T-cell (primary cell): ENCODE measurements at regions of chr2 and their contacts with region 1.

Region 1: DNA sequence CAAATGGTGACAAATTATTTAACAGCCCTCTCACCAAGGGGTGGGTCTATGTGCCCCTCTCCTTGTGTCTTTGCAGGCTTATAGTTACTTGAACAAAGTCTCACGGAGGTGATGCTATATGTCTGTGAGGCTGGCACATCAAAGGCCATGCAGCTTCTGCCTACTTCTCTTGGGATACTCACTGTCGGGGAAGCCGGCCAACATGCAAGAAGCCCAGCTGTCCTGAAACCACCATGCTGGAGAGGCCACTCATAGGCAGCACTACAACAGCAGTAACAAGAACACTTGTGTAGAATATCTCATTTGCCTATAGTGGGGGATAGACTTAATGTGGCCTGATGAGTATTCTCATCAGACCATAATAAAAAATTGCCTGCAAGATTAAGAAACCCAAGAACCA is 233.7 kb upstream of the NCKAP5 start:
- DNase-seq: no peak
- ATAC-seq: no peak
- H3K4me3 ChIP-seq: no peak overlapping the region
- H3K4me3 Mint-ChIP-seq: no peak overlapping the region
- H3K27ac ChIP-seq: no peak overlapping the region
- H3K27ac Mint-ChIP-seq: no peak overlapping the region
- H3K4me1 ChIP-seq: no peaks in the 10 kb centered on the region
- H3K4me1 Mint-ChIP-seq: no peaks in the 10 kb centered on the region
- H3K27me3 ChIP-seq: peaks cover 0 to 4% of the 10 kb centered on the region in 2 experiments
- H3K27me3 Mint-ChIP-seq: peaks cover 20 to 28% of the 10 kb centered on the region in 2 donors

Region 2: DNA sequence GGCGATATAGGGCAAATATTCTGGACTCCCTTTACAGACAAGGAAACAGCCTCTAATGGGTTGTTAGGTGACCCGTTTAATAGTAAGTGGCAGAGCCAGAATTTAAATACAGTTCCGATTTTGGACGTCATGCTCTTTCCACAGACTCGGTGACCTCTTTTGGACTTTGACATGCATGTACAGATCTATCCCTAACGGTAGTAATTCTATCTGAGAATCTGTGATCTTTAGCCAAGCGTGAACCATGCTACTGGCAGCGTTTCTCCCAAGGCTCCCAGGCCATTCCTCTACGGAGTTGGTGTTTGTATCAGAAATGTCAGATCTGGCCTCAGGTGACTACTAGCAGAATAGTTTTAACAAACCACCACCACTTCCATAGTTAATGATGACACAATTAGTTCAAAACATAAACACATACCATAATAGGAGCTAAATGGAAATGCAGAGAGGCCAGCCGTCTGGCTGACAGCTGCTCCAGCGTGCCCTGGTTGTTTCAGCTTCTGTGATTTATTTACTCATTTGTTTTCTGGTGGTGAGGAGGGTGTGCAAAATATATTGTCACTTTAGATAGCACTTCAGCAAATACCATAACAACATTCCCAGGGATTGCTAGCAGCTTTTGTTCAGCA is 827.4 kb before region 1 on chr2:
- CTCF ChIA-PET with region 1: no interaction called
- POLR2A ChIA-PET with region 1: interaction called in 1 of 2 experiments, 11 read pairs
- DNase-seq: no peak
- ATAC-seq: no peak
- H3K4me3 ChIP-seq: no peak overlapping the region
- H3K4me3 Mint-ChIP-seq: no peak overlapping the region
- H3K27ac ChIP-seq: no peak overlapping the region
- H3K27ac Mint-ChIP-seq: no peak overlapping the region
- H3K4me1 ChIP-seq: no peaks in the 10 kb centered on the region
- H3K4me1 Mint-ChIP-seq: no peaks in the 10 kb centered on the region
- H3K27me3 ChIP-seq: no peaks in the 10 kb centered on the region
- H3K27me3 Mint-ChIP-seq: no peaks in the 10 kb centered on the region

Region 3: DNA sequence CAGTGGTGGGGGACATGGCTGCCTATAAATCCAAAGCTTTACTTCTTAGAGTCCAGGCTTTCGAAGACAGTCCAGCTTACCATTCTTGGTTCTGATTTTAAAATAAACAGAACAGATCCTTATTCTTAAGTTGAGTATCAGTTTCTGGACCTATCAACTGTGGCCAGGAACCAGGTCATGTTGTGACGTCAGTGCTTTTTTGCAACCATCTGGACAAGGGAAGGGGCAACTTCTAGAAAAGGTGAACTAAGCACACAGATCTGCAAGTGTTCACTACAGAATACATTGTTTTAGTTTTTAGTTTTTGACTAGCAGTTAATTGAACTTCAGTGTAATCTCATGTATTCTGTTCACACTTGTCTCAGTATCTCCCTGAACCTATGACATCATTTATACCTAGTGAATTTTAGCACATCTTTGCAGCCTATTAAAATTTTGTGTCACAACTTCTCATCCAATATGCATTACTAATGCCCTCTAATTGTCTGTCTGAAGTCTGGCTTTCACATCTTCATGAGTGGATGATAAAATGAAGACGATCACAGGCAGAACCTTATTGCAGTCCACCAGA is 126.0 kb after region 1 on chr2:
- CTCF ChIA-PET with region 1: no interaction called
- POLR2A ChIA-PET with region 1: no interaction called
- DNase-seq: no peak
- ATAC-seq: no peak
- H3K4me3 ChIP-seq: no peak overlapping the region
- H3K4me3 Mint-ChIP-seq: no peak overlapping the region
- H3K27ac ChIP-seq: no peak overlapping the region
- H3K27ac Mint-ChIP-seq: no peak overlapping the region
- H3K4me1 ChIP-seq: no peaks in the 10 kb centered on the region
- H3K4me1 Mint-ChIP-seq: no peaks in the 10 kb centered on the region
- H3K27me3 ChIP-seq: peaks cover 0 to 2% of the 10 kb centered on the region in 2 experiments
- H3K27me3 Mint-ChIP-seq: peaks cover 9 to 13% of the 10 kb centered on the region in 2 donors

Region 4: DNA sequence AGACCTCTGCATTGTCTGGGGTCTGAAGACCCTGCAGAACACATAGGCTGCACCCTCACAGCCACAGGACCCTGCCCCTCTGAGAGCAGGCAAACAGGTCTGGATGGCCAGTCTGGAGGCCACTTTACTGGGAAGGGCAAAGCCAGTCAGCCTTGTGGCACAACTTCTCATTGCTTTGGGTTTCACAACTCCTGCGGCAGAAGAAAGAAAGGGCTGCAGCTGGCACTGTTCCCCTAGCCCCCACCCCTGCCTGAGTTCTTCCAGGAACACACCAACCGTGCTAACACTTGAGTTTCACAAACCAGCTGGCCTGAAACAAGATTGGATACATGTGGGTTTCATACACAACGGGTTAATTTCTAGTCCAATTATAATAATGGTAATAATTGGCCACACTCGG is 175.5 kb after region 1 on chr2:
- CTCF ChIA-PET with region 1: no interaction called
- POLR2A ChIA-PET with region 1: no interaction called
- DNase-seq: no peak
- ATAC-seq: no peak
- H3K4me3 ChIP-seq: no peak overlapping the region
- H3K4me3 Mint-ChIP-seq: no peak overlapping the region
- H3K27ac ChIP-seq: no peak overlapping the region
- H3K27ac Mint-ChIP-seq: no peak overlapping the region
- H3K4me1 ChIP-seq: no peaks in the 10 kb centered on the region
- H3K4me1 Mint-ChIP-seq: no peaks in the 10 kb centered on the region
- H3K27me3 ChIP-seq: no peaks in the 10 kb centered on the region
- H3K27me3 Mint-ChIP-seq: peaks cover 0 to 5% of the 10 kb centered on the region in 2 donors